ENCODE measurements at regions of chr11 and their contacts with region 1.

Region 1: DNA sequence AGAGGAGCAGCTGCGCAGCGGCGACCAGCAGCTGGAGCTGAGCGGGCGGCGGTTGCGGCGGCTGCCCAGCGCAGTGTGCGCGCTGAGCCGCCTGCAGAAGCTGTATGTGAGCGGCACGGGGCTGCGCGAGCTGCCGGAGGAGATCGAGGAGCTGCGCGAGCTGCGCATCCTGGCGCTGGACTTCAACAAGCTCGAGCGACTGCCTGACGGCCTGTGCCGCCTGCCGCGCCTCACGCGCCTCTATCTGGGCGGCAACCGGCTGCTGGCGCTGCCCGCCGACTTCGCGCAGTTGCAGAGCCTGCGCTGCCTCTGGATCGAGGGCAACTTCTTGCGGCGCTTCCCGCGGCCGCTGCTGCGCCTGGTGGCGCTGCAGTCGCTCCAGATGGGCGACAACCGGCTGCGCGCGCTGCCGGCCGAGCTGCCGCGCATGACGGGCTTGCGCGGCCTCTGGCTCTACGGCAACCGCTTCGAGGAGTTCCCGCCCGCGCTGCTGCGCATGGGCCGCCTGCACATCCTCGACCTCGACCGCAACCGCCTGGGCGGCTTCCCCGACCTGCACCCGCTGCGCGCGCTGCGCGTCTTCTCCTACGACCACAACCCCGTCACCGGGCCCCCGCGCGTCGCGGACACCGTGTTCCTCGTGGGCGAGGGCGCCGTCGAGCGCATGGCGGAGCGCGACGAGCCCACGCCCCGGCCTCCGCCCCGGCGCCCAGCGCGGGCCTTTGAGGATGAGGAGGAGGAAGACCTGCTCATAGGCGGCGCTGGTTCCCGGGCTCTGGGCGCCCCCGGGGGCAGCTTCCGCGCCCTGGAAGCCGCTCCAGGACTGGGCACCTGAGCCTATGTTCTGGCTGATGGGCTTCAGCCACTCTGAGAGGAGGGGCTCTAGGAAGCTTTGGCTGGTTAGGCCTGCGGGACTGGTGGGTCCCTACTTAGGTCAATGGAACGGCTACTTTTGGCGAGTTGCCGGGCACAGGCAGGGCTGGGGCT is 787 bp downstream of the LRRC10B start:
- DNase-seq: peak; percentile 80
- ATAC-seq: peak; percentile 63
- H3K4me3 Mint-ChIP-seq: peak overlapping the region; percentile 48
- H3K27ac Mint-ChIP-seq: no peak overlapping the region
- H3K4me1 Mint-ChIP-seq: peaks cover 58% of the 10 kb centered on the region
- H3K27me3 Mint-ChIP-seq: peaks cover 59% of the 10 kb centered on the region
- CTCF ChIP-seq: no peak

Region 2: DNA sequence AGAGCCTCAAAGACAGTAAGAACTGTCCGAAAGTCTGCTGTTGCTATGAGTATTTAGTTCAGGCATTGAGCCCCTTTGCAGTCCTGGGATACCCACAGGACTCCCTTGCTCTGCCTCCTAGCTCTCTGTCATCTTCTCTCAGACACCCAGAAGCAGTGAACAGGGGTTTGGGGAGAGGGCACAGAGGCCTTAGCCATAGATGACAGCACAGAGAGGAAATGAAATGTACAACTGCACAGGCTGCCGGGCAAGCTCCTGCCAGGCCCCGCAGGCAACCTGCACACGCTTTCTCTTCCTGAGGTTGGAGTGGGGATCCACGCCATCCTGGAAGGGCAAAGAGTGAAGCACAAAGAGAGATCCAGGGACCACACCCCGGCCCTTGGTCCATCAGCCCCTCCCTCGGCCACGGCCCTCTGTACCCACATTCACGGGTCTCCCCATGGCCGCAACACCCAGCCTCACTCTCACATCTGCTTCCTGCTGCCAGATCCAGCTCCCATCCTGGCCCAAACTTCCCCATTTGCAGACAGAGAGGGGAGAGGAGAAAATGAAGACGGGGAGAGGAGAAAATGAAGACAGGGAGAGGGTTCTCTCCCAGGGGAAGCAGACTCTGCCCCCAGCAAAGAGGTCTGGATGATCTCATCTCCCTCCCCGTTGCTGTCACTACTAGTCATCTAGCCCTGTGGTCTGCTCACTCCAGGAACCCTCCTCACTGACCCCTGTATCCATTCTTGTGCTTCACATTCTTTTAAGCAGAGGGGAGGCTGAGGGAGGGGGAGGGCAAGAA is 497.2 kb before region 1 on chr11:
- CTCF ChIA-PET with region 1: no interaction called
- POLR2A ChIA-PET with region 1: no interaction called
- DNase-seq: no peak
- ATAC-seq: no peak
- H3K4me3 Mint-ChIP-seq: no peak overlapping the region
- H3K27ac Mint-ChIP-seq: no peak overlapping the region
- H3K4me1 Mint-ChIP-seq: peaks cover 6% of the 10 kb centered on the region
- H3K27me3 Mint-ChIP-seq: peaks cover 88% of the 10 kb centered on the region
- CTCF ChIP-seq: no peak

Region 3: GRCh38 chr11:61345170-61345610 is 164.1 kb before region 1 on chr11:
- CTCF ChIA-PET with region 1: no interaction called
- POLR2A ChIA-PET with region 1: no interaction called
- DNase-seq: no peak
- ATAC-seq: no peak
- H3K4me3 Mint-ChIP-seq: no peak overlapping the region
- H3K27ac Mint-ChIP-seq: no peak overlapping the region
- H3K4me1 Mint-ChIP-seq: no peaks in the 10 kb centered on the region
- H3K27me3 Mint-ChIP-seq: no peaks in the 10 kb centered on the region
- CTCF ChIP-seq: no peak

Region 4: DNA sequence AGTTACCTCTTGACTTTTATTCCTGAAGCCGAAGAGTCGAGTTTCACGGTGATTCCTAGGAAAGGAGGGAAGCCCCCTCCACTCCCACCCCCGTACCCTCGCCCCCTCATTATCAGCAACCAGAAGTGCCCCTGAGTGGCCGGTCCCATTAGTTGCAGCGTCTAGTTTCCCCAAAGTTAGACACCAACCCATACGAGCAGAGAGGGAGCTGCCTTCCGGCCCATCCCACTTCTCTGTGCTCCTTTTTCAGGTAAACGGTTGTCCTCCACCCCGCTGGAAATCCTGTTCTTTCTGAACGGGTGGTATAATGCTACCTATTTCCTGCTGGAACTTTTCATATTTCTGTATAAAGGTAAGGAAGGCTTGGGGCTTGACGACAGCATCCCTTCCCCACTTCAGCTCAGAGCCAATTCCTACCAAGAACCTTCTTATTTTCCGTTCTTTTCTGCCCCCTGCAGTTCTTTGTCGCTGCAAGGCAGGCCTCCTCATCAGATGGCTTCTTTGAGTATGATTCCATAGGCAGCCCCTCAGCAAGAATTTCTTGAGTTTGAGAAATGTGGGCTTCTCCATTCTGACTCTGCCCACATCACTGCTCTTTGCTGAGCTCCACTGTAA is 116.2 kb before region 1 on chr11:
- CTCF ChIA-PET with region 1: no interaction called
- POLR2A ChIA-PET with region 1: no interaction called
- DNase-seq: no peak
- ATAC-seq: peak; percentile 14
- H3K4me3 Mint-ChIP-seq: peak overlapping the region; percentile 96
- H3K27ac Mint-ChIP-seq: peak overlapping the region; percentile 80
- H3K4me1 Mint-ChIP-seq: peaks cover 22% of the 10 kb centered on the region
- H3K27me3 Mint-ChIP-seq: no peaks in the 10 kb centered on the region
- CTCF ChIP-seq: no peak

Region 5: GRCh38 chr11:61495801-61496597 is 13.3 kb before region 1 on chr11:
- CTCF ChIA-PET with region 1: interaction called, 552 read pairs
- POLR2A ChIA-PET with region 1: interaction called, 4 read pairs
- DNase-seq: no peak
- ATAC-seq: no peak
- H3K4me3 Mint-ChIP-seq: no peak overlapping the region
- H3K27ac Mint-ChIP-seq: no peak overlapping the region
- H3K4me1 Mint-ChIP-seq: peaks cover 20% of the 10 kb centered on the region
- H3K27me3 Mint-ChIP-seq: no peaks in the 10 kb centered on the region
- CTCF ChIP-seq: no peak